ENCODE measurements at regions of chr16 and their contacts with region 1.

Region 1: DNA sequence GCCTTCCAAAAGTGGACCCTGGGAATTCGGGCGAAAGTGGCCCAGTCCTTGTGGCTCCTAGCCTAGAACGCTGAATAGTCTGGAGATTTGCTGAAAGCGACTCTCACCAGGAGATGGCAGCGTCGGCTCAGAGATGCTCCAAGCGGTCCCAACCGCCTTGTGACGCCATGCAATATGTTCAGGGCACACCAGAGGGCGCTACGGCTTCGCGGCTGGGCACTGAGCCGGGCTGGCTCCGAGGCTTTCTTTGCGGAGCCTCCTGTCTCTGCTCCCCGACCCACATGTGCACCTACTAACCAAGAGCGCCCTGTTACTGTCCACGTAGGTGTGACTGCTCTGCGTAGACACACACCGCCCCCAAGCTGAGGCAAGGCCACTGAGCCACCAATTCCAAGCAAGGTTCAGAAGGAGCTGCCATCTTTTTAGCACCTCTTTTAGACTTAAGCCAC is 36.9 kb downstream of the SYCE1L start:
- DNase-seq: peak; percentile 89
- ATAC-seq: peak; percentile 99
- H3K4me3 Mint-ChIP-seq: no peak overlapping the region
- H3K27ac Mint-ChIP-seq: no peak overlapping the region
- H3K4me1 Mint-ChIP-seq: peaks cover 4% of the 10 kb centered on the region
- H3K27me3 Mint-ChIP-seq: peaks cover 19% of the 10 kb centered on the region

Region 2: GRCh38 chr16:77584205-77584859 is 348.2 kb after region 1 on chr16:
- CTCF ChIA-PET with region 1: interaction called, 76 read pairs
- DNase-seq: peak; percentile 56
- ATAC-seq: no peak
- H3K4me3 Mint-ChIP-seq: no peak overlapping the region
- H3K27ac Mint-ChIP-seq: no peak overlapping the region
- H3K4me1 Mint-ChIP-seq: peaks cover 9% of the 10 kb centered on the region
- H3K27me3 Mint-ChIP-seq: peaks cover 10% of the 10 kb centered on the region

Measured in activated CD8-positive, alpha-beta memory T cell treated with anti-CD3 and anti-CD28 coated beads, Interleukin-2, amount 10 ng/mL, durations not matched to agents 7 days and 5 days (primary cell).